IMR-90 (cell line): ENCODE measurements at regions of chr1 and their contacts with region 1.

Region 1: GRCh38 chr1:93629099-93630059 is 52.3 kb downstream of the BCAR3 start:
- DNase-seq: peak; percentile 85
- ATAC-seq: peak; percentile 78
- H3K4me3 ChIP-seq: no peak overlapping the region
- H3K27ac ChIP-seq: 0 out of 2 replicates have a peak overlapping the region, but pooled peaks have one; percentile 8
- H3K4me1 ChIP-seq: peaks cover 12% of the 10 kb centered on the region
- H3K27me3 ChIP-seq: no peaks in the 10 kb centered on the region
- CTCF ChIP-seq: peak; percentile 88
- POLR2A ChIP-seq: 0 out of 2 replicates have a peak, but pooled peaks have one; percentile 24
- RAD21 ChIP-seq: peak; percentile 95

Region 2: DNA sequence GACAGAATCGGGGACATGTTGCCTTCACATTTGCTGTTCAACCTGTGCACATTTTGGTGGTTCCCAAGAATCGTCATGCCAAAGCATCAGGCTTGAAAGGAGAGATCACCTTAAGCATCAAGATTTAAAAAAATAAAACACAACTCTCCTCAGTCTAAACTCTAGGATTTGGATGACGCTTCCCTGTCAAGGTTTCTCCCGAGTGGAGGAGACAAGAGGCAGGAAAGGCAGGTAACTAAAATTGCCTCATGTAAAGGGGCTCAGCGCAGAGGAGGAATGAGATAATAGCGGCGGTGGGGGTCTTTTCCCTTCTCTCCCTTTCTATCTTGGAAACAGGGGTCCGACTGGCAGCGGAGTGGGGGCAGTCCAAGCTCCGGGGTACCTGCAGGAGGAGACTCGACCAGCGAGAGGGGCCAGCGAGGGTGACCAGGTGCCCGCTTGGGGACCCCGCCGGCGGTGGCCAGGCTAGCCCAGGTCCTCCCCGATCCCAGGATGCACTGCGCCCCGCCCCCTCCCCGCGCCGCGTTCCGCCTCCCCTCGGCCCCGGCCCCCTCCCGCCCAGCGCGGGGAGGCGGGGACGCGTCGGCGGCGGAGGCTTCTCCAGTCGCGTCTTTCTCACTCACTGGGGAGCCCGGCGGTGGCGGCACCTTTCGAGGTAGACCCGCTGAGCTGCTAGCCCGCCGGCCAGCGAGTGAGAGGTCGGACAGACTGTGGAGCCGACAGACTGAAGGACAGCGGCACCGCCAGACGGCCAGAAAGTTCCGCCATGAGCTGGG is 181.7 kb before region 1 on chr1 and contains the start of gene FNBP1L:
- CTCF ChIA-PET with region 1: no interaction called
- POLR2A ChIA-PET with region 1: no interaction called
- dilution Hi-C with region 1: no loop called
- in situ Hi-C with region 1: loop called (anchors 10 kb)
- intact Hi-C with region 1: no loop called
- DNase-seq: peak; percentile 52
- ATAC-seq: peak; percentile 93
- H3K4me3 ChIP-seq: peak within 1 kb of the TSS; percentile 99
- H3K27ac ChIP-seq: peak within 1 kb of the TSS; percentile 64
- H3K4me1 ChIP-seq: no peaks in the 10 kb centered on the region
- H3K27me3 ChIP-seq: no peaks in the 10 kb centered on the region
- CTCF ChIP-seq: no peak
- POLR2A ChIP-seq: no peak
- RAD21 ChIP-seq: no peak
- total RNA-seq, gene FNBP1L: 15.2 and 24.4 TPM in 2 replicates

Region 3: DNA sequence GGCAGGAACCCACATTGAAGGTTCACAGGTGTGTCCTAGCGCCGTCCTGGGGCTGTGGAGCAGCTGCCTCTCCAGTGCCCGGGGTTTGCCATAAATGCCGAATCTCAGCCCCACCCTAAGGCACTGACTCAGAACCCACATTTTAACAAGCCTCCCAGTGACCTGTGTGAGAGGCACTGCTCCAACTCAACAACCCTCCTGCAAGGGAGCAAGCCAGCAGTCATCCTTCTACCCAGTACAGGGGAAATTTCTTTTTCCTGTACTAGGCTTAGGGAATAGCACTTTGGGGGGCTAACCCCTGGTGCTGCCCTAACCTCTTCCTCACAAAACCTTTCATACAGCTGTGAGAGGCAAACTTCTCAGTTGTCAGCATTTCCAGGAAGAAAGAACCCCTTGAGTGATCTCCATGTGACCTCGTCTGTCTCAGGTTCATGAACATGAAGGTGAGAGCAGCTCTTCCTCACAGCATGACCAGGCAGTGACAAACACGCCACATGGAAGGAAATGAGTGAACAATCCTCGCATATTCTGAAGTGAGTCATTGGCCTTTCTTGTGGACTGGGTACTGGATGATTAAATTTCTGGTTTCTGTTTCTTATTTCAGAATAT is 63.7 kb after region 1 on chr1:
- CTCF ChIA-PET with region 1: no interaction called
- POLR2A ChIA-PET with region 1: no interaction called
- dilution Hi-C with region 1: no loop called
- in situ Hi-C with region 1: loop called (anchors 10 kb)
- intact Hi-C with region 1: no loop called
- DNase-seq: peak; percentile 90
- ATAC-seq: peak; percentile 74
- H3K4me3 ChIP-seq: no peak overlapping the region
- H3K27ac ChIP-seq: peak overlapping the region; percentile 13; the same call in 1 of the 2 replicates
- H3K4me1 ChIP-seq: peaks cover 23% of the 10 kb centered on the region
- H3K27me3 ChIP-seq: no peaks in the 10 kb centered on the region
- CTCF ChIP-seq: no peak
- POLR2A ChIP-seq: no peak
- RAD21 ChIP-seq: no peak

Region 4: GRCh38 chr1:93814059-93814794 is 184.8 kb after region 1 on chr1:
- CTCF ChIA-PET with region 1: interaction called, 38 read pairs
- POLR2A ChIA-PET with region 1: interaction called, 4 read pairs
- dilution Hi-C with region 1: no loop called
- in situ Hi-C with region 1: no loop called
- intact Hi-C with region 1: loop called (anchors 1 kb)
- DNase-seq: peak; percentile 84
- ATAC-seq: peak; percentile 88
- H3K4me3 ChIP-seq: no peak overlapping the region
- H3K27ac ChIP-seq: no peak overlapping the region
- H3K4me1 ChIP-seq: peaks cover 10% of the 10 kb centered on the region
- H3K27me3 ChIP-seq: no peaks in the 10 kb centered on the region
- CTCF ChIP-seq: peak; percentile 99
- POLR2A ChIP-seq: peak; percentile 63; the same call in 1 of the 2 replicates
- RAD21 ChIP-seq: peak; percentile 100

Region 5: DNA sequence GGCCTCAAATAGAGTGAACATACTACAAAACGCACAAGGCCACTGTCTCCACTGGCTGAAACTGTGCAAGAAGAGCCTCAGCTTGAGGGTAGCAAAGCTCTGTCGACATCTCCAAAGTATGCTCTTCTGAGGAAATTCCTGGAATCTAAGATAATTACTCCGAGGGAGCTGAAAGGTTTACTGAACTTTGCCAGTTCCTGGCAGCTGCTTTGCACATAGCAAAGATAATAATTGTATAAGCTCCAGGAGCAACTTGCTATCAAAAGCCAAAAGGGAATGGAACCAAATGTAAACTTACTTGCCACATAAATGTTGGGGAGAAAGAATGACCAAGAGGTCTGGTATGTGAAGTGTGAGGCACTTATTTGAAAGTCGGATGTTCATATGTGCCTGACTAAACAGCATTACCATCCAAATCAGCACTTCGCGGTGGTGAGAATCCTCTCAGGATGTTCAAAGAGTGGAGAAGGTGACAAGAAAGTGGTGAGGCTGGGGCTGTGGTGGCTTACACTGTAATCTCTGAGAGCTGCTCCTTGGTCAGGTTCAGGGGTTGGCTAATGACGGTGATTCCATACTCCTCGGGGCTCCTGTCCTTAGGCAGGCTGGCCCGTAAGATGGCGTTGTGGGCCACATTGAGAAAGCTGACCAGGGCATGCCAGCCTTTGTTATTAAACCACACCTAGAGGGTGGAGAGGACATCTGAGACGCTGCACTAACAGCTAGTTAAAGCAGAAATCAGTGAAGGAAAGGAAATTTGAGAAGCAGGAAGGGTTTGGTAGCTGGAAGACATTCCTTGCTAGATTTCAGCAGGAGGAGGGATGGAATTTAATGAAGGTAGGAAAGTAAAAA is 391.6 kb after region 1 on chr1:
- CTCF ChIA-PET with region 1: no interaction called
- POLR2A ChIA-PET with region 1: no interaction called
- dilution Hi-C with region 1: no loop called
- in situ Hi-C with region 1: no loop called
- intact Hi-C with region 1: no loop called
- DNase-seq: peak; percentile 98
- ATAC-seq: peak; percentile 78
- H3K4me3 ChIP-seq: no peak overlapping the region
- H3K27ac ChIP-seq: peak overlapping the region; percentile 98
- H3K4me1 ChIP-seq: peaks cover 31% of the 10 kb centered on the region
- H3K27me3 ChIP-seq: no peaks in the 10 kb centered on the region
- CTCF ChIP-seq: no peak
- POLR2A ChIP-seq: no peak
- RAD21 ChIP-seq: no peak